PC-9 (cell line): ENCODE measurements at regions of chr6 and their contacts with region 1.

Region 1: GRCh38 chr6:26103770-26104456 is 16.7 kb downstream of the HFE start:
- DNase-seq: peak; percentile 87
- H3K4me3 ChIP-seq: peak overlapping the region; percentile 65
- H3K27ac ChIP-seq: peak overlapping the region; percentile 78
- H3K4me1 ChIP-seq: peaks cover 27% of the 10 kb centered on the region
- H3K27me3 ChIP-seq: no peaks in the 10 kb centered on the region
- CTCF ChIP-seq: peak; percentile 68

Region 2: DNA sequence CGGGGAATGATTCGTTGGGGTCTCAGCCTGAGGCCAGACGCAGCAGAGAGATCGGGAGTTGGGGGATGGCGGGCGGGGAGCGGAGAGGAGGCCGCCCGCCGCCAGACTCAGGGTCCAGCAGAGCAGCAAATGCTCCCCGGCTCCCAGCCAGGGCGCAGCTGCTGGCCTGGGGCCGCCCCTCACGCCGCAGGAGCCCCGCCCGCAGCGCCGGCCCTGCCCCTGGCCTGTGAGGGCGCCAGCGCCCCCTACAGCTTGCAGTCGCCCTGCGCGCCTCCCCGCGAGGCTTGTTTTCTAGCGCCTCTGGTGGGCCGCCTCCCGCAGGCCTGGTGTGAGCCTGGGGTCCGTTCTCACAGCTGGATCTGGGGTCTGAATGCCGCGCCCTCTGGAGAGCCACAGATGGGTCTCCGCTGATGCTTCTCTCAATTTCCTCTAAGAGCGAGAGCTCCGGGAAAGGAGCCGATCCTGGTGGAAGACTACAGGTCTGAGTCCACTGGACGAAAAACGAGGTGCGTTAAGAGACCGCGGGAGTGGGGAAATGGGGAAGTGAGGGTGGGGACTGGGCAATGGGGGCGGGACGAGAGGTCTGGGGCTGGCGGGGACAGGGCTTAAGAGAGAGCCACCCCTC is 111.4 kb before region 1 on chr6:
- CTCF ChIA-PET with region 1: no interaction called
- POLR2A ChIA-PET with region 1: interaction called, 12 read pairs
- intact Hi-C with region 1: no loop called
- DNase-seq: peak; percentile 77 to 99
- H3K4me3 ChIP-seq: peak overlapping the region; percentile 83
- H3K27ac ChIP-seq: peak overlapping the region; percentile 76
- H3K4me1 ChIP-seq: peaks cover 10% of the 10 kb centered on the region; the same call in 1 of the 2 replicates
- H3K27me3 ChIP-seq: no peaks in the 10 kb centered on the region
- CTCF ChIP-seq: peak; percentile 88

Region 3: GRCh38 chr6:26045065-26045927 is 58.6 kb before region 1 on chr6:
- CTCF ChIA-PET with region 1: interaction called, 3 read pairs
- POLR2A ChIA-PET with region 1: interaction called, 10 read pairs
- intact Hi-C with region 1: no loop called
- DNase-seq: peak; percentile 74 to 88
- H3K4me3 ChIP-seq: peak overlapping the region; percentile 59
- H3K27ac ChIP-seq: peak overlapping the region; percentile 77
- H3K4me1 ChIP-seq: peaks cover 21% of the 10 kb centered on the region; the same call in 1 of the 2 replicates
- H3K27me3 ChIP-seq: no peaks in the 10 kb centered on the region
- CTCF ChIP-seq: no peak; the same call in 1 of the 2 replicates

Region 4: GRCh38 chr6:26122793-26123674 is 19.1 kb after region 1 on chr6:
- CTCF ChIA-PET with region 1: no interaction called
- POLR2A ChIA-PET with region 1: interaction called, 73 read pairs
- intact Hi-C with region 1: loop called (anchors 1 kb)
- DNase-seq: peak; percentile 91 to 98
- H3K4me3 ChIP-seq: peak overlapping the region; percentile 86
- H3K27ac ChIP-seq: peak overlapping the region; percentile 78
- H3K4me1 ChIP-seq: peaks cover 22% of the 10 kb centered on the region
- H3K27me3 ChIP-seq: no peaks in the 10 kb centered on the region
- CTCF ChIP-seq: no peak

Region 5: GRCh38 chr6:26270903-26271667 is 167.2 kb after region 1 on chr6:
- CTCF ChIA-PET with region 1: no interaction called
- POLR2A ChIA-PET with region 1: interaction called, 10 read pairs
- intact Hi-C with region 1: loop called (anchors 5 kb)
- DNase-seq: peak; percentile 65 to 80
- H3K4me3 ChIP-seq: peak overlapping the region; percentile 73
- H3K27ac ChIP-seq: peak overlapping the region; percentile 62
- H3K4me1 ChIP-seq: peaks cover 24% of the 10 kb centered on the region
- H3K27me3 ChIP-seq: no peaks in the 10 kb centered on the region
- CTCF ChIP-seq: no peak

Region 6: GRCh38 chr6:26568601-26569432 is 464.9 kb after region 1 on chr6:
- CTCF ChIA-PET with region 1: no interaction called
- POLR2A ChIA-PET with region 1: interaction called, 22 read pairs
- intact Hi-C with region 1: no loop called
- DNase-seq: peak; percentile 90 to 97
- H3K4me3 ChIP-seq: peak overlapping the region; percentile 59
- H3K27ac ChIP-seq: no peak overlapping the region
- H3K4me1 ChIP-seq: no peaks in the 10 kb centered on the region
- H3K27me3 ChIP-seq: no peaks in the 10 kb centered on the region
- CTCF ChIP-seq: peak; percentile 13; the same call in 1 of the 2 replicates